ENCODE measurements at regions of chr12 and their contacts with region 1.

Region 1: GRCh38 chr12:31959161-31959700 is at the start of gene RESF1:
- DNase-seq: peak; percentile 82
- ATAC-seq: peak; percentile 87
- H3K4me3 Mint-ChIP-seq: peak within 1 kb of the TSS; percentile 99
- H3K27ac Mint-ChIP-seq: peak within 1 kb of the TSS; percentile 99
- H3K4me1 Mint-ChIP-seq: peaks cover 76% of the 10 kb centered on the region
- H3K27me3 Mint-ChIP-seq: no peaks in the 10 kb centered on the region
- CTCF ChIP-seq: no peak
- total RNA-seq, gene RESF1: 286 and 299 TPM in 2 replicates

Region 2: DNA sequence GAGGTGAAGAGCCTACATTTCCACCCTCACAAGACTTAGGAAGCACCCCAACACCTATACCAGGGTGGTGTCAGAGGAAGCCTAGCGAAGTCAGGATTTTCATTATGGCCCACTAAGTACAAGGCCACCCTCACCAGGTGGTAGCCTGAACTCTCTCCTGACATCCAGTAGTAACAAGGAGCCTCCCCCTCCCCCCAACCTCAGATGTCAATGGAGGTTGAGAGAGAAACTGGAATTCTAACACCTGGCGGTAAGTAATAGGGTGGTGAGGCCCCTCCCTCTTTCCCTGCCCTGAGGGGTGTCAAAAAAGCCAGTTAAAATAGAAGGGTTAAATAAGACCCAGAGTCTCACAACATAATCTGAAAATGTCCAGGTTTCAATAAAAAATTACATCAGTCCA is 670.9 kb before region 1 on chr12:
- CTCF ChIA-PET with region 1: no interaction called
- POLR2A ChIA-PET with region 1: no interaction called
- intact Hi-C with region 1: no loop called
- DNase-seq: no peak
- ATAC-seq: no peak
- H3K4me3 Mint-ChIP-seq: no peak overlapping the region
- H3K27ac Mint-ChIP-seq: no peak overlapping the region
- H3K4me1 Mint-ChIP-seq: no peaks in the 10 kb centered on the region
- H3K27me3 Mint-ChIP-seq: no peaks in the 10 kb centered on the region
- CTCF ChIP-seq: no peak

Region 3: GRCh38 chr12:31659087-31659933 is 299.9 kb before region 1 on chr12 and contains the start of gene ETFBKMT:
- CTCF ChIA-PET with region 1: no interaction called
- POLR2A ChIA-PET with region 1: interaction called, 31 read pairs
- intact Hi-C with region 1: loop called (anchors 1 kb)
- DNase-seq: peak; percentile 88
- ATAC-seq: peak; percentile 98
- H3K4me3 Mint-ChIP-seq: peak within 1 kb of the TSS; percentile 96
- H3K27ac Mint-ChIP-seq: peak within 1 kb of the TSS; percentile 99
- H3K4me1 Mint-ChIP-seq: peaks cover 35% of the 10 kb centered on the region
- H3K27me3 Mint-ChIP-seq: no peaks in the 10 kb centered on the region
- CTCF ChIP-seq: no peak
- total RNA-seq, gene ETFBKMT: 0.91 and 2.0 TPM in 2 replicates

Region 4: DNA sequence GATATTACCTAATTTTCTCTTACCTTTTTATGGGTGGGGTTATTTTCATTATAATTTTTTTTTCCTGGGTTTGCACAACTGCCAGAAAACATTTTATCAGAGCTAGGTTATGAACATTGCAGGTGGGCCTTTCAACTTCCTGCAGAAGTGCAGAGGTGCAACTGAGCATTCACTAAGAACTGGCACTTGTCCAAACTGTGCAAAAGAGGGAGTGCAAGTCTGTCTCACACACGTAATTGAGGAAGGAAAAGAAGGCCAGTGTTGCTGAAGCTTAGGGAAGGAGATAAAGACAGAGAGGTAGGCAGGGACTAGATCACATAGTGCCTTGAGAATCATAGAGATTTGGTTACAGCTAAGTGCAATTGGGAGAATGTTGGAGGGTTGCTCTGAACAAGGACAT is 216.3 kb before region 1 on chr12:
- CTCF ChIA-PET with region 1: interaction called, 3 read pairs
- POLR2A ChIA-PET with region 1: interaction called, 24 read pairs
- intact Hi-C with region 1: no loop called
- DNase-seq: no peak
- ATAC-seq: peak; percentile 40
- H3K4me3 Mint-ChIP-seq: peak overlapping the region; percentile 17
- H3K27ac Mint-ChIP-seq: peak overlapping the region; percentile 85
- H3K4me1 Mint-ChIP-seq: peaks cover 87% of the 10 kb centered on the region
- H3K27me3 Mint-ChIP-seq: no peaks in the 10 kb centered on the region
- CTCF ChIP-seq: no peak

Region 5: DNA sequence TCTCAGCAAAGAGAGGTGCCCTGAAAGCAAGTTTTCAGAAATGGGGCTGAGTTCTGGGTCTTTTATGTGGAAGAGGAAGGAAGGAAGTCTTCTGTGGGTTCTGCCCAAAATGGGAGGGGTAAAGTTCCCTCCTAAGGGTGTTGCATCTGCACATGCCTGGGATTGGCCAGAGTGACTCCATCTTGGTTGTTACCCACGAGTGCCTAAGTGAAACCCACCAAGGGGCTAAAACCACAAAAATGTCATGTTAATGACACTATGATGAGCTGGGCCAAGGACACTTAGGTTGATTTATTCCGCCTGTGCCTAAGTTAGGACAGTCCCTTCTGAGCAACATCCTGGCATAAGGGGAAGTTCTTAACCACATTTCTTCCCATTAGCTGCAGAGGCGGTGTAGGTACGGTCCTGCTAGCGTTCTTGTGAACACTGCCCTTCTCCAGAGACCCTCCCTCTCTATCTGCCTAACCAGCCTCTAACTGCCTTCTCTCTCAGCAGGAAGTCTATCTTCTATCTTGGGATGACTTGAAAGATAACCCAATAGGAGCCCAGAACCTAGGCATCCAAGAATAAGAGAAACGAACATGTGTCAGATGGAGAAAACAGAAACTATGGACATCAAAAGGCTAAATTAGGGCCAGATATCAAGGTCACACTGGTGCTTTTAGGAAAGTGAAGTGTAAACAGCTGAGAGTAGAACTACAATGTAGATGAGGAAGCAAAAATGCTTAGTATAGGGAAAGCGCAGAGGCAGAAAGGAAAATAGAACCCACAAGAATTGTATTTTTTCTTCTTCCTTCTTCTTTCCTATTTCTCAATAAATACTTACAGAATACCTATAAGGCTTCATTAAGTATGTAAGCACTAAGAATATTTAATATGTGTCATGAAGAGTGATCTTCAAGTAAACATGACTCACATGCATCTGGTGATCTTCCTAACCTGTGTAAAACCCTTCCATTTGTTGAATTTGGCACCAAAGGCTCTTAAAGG is 126.2 kb before region 1 on chr12:
- CTCF ChIA-PET with region 1: interaction called, 3 read pairs
- POLR2A ChIA-PET with region 1: interaction called, 44 read pairs
- intact Hi-C with region 1: loop called (anchors 1 kb)
- DNase-seq: peak; percentile 36
- ATAC-seq: peak; percentile 84
- H3K4me3 Mint-ChIP-seq: peak overlapping the region; percentile 59
- H3K27ac Mint-ChIP-seq: peak overlapping the region; percentile 94
- H3K4me1 Mint-ChIP-seq: peaks cover 76% of the 10 kb centered on the region
- H3K27me3 Mint-ChIP-seq: no peaks in the 10 kb centered on the region
- CTCF ChIP-seq: no peak

Region 6: DNA sequence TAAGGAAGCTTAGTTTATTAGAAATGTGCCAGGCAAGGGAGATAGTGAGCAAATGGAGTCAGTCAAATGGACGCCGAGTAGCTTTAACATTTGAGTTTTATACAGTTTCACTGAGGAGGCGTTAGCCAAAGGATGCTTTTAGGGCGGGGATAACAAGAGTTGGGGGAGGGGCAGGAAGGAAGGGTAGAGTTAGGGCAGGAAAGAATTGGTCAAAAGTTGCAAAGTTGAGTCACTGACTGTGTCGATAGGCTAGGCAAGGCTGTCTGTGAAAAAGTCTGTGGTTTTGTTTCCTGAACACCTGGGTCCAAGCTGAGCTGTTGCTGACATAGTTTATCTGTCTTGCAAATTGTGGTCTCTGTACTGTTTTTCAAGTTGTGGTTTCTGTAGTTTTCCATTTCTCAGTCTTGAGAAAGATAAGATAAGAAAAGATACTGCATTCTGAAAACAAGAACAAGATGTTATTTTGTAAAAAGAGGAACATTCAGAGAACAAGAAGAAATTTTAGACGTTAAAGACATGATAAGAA is 62.7 kb before region 1 on chr12:
- CTCF ChIA-PET with region 1: interaction called, 3 read pairs
- POLR2A ChIA-PET with region 1: interaction called, 85 read pairs
- intact Hi-C with region 1: loop called (anchors 1 kb)
- DNase-seq: peak; percentile 58
- ATAC-seq: peak; percentile 93
- H3K4me3 Mint-ChIP-seq: peak overlapping the region; percentile 73
- H3K27ac Mint-ChIP-seq: peak overlapping the region; percentile 96
- H3K4me1 Mint-ChIP-seq: peaks cover 69% of the 10 kb centered on the region
- H3K27me3 Mint-ChIP-seq: no peaks in the 10 kb centered on the region
- CTCF ChIP-seq: no peak

Region 7: GRCh38 chr12:32139064-32139421 is 179.8 kb after region 1 on chr12:
- CTCF ChIA-PET with region 1: no interaction called
- POLR2A ChIA-PET with region 1: interaction called, 7 read pairs
- intact Hi-C with region 1: loop called (anchors 1 kb)
- DNase-seq: peak; percentile 27
- ATAC-seq: peak; percentile 83
- H3K4me3 Mint-ChIP-seq: peak overlapping the region; percentile 79
- H3K27ac Mint-ChIP-seq: peak overlapping the region; percentile 96
- H3K4me1 Mint-ChIP-seq: peaks cover 74% of the 10 kb centered on the region
- H3K27me3 Mint-ChIP-seq: no peaks in the 10 kb centered on the region
- CTCF ChIP-seq: no peak

Measured in activated B cell treated with CpG ODN at 0.5 μM for 24 hours (primary cell).